Natural killer cell (primary cell): ENCODE measurements at regions of chr14 and their contacts with region 1.

Region 1: GRCh38 chr14:35404449-35405303 is at the start of gene NFKBIA:
- DNase-seq: peak; percentile 96 to 97
- ATAC-seq: peak; percentile 51 to 81 (median 63)
- H3K4me3 ChIP-seq: peak within 1 kb of the TSS; percentile 90
- H3K4me3 Mint-ChIP-seq: peak within 1 kb of the TSS; percentile 99
- H3K27ac ChIP-seq: peak within 1 kb of the TSS; percentile 96
- H3K27ac Mint-ChIP-seq: peak within 1 kb of the TSS; percentile 98
- H3K4me1 ChIP-seq: peaks cover 46% of the 10 kb centered on the region
- H3K4me1 Mint-ChIP-seq: peaks cover 59 to 63% of the 10 kb centered on the region in 2 donors
- H3K27me3 ChIP-seq: no peaks in the 10 kb centered on the region
- H3K27me3 Mint-ChIP-seq: no peaks in the 10 kb centered on the region
- CTCF ChIP-seq: no peak
- total RNA-seq, gene NFKBIA: 2,039 to 3,339 (median 2,499) TPM

Region 2: GRCh38 chr14:34857689-34858449 is 546.8 kb before region 1 on chr14:
- intact Hi-C with region 1: loop called (anchors 5 kb)
- DNase-seq: peak; percentile 27 to 64
- ATAC-seq: peak; percentile 69 to 88 (median 78)
- H3K4me3 ChIP-seq: no peak overlapping the region
- H3K4me3 Mint-ChIP-seq: peak overlapping the region; percentile 87
- H3K27ac ChIP-seq: peak overlapping the region; percentile 80
- H3K27ac Mint-ChIP-seq: peak overlapping the region; percentile 86 to 94
- H3K4me1 ChIP-seq: peaks cover 30% of the 10 kb centered on the region
- H3K4me1 Mint-ChIP-seq: peaks cover 44 to 49% of the 10 kb centered on the region in 2 donors
- H3K27me3 ChIP-seq: no peaks in the 10 kb centered on the region
- H3K27me3 Mint-ChIP-seq: no peaks in the 10 kb centered on the region
- CTCF ChIP-seq: no peak

Region 3: DNA sequence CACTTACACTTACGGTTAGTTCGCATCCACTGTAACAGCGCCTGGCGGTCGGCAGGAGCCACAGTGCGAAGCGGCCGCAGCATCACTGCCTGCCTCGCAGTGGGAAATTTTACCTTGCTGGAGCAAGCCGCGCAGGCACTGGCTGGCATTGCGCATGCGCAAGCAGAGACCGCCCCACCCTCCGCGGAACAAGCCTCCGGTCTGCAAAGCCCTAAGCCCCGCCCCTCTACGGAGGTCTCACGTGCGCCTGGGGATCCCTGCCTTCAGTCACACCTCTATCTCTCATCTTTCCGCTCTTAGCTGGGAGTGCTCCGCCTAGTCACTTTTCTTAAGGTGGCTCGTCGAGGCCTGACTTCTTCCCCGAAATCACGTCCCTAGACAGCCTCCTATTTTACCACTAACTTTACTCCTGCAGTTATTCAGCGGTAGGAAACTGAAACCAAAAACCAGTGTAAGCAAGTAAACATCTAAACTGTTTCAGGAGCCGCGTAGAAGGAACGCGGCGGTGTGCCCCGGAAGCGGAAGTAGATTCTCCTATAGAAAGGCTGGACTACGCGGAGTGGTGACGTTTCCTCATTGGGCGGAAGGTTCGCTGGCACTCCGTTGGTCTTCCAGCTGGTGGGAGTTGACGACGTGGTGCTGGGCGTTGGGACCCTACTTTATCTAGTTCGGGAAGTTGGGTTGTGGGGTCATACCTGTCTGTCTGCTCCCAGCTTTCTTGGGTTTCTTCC is 422.1 kb before region 1 on chr14 and contains the start of gene SRP54:
- intact Hi-C with region 1: loop called (anchors 5 kb)
- DNase-seq: peak; percentile 99 to 100
- ATAC-seq: peak; percentile 89 to 98 (median 89)
- H3K4me3 ChIP-seq: peak within 1 kb of the TSS; percentile 74
- H3K4me3 Mint-ChIP-seq: no peak within 1 kb of the TSS
- H3K27ac ChIP-seq: peak within 1 kb of the TSS; percentile 94
- H3K27ac Mint-ChIP-seq: no peak within 1 kb of the TSS
- H3K4me1 ChIP-seq: peaks cover 20% of the 10 kb centered on the region
- H3K4me1 Mint-ChIP-seq: peaks cover 0 to 6% of the 10 kb centered on the region in 2 donors
- H3K27me3 ChIP-seq: no peaks in the 10 kb centered on the region
- H3K27me3 Mint-ChIP-seq: no peaks in the 10 kb centered on the region
- CTCF ChIP-seq: no peak
- total RNA-seq, gene SRP54: 41.2 to 63.2 (median 48.8) TPM

Region 4: DNA sequence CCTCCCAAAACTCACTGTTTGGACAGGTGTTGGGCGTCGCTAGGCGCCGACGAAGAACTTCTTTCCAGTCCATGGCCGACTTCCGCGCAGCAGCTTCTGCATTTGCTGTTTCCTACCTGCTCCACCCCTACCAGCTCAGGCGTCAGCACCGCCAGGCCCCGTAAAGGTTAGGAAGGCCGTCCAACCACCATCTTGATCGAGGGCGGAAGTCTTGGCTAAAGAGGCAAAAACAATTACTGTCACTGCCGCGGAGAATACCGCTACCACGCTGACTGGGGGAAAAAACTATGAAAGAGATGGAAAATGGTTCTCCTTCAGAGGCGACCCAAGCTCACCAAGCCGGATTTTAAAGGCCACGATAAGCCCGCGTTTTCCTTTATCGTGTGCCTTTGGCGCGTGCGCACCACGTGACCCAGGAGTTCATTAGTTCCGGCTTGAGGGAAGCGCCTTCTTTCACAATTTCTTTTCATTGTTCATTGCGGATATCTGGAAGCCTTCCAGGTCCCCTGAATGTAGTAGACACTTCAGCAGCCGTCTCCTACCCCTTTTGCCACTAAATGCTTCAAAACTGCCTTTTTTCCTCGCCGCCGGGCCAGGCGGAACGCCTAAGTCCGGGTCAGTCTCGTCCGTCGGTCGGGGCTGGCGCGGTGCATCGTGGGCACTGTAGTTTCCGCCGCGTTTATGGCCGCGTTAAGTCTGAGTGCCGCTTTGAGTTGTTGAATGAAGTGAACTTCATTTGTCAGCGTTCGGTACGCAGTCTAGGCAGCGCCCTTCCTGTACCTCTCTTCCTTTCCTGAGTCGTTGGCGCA is 282.6 kb before region 1 on chr14 and contains the starts of genes PPP2R3C and PRORP:
- intact Hi-C with region 1: loop called (anchors 1 kb)
- DNase-seq: peak; percentile 81 to 96
- ATAC-seq: peak; percentile 83 to 94 (median 85)
- H3K4me3 ChIP-seq: peak within 1 kb of the TSS; percentile 72
- H3K4me3 Mint-ChIP-seq: peak within 1 kb of the TSS; percentile 97
- H3K27ac ChIP-seq: peak within 1 kb of the TSS; percentile 96
- H3K27ac Mint-ChIP-seq: peak within 1 kb of the TSS; percentile 99
- H3K4me1 ChIP-seq: peaks cover 33% of the 10 kb centered on the region
- H3K4me1 Mint-ChIP-seq: peaks cover 56 to 60% of the 10 kb centered on the region in 2 donors
- H3K27me3 ChIP-seq: no peaks in the 10 kb centered on the region
- H3K27me3 Mint-ChIP-seq: no peaks in the 10 kb centered on the region
- CTCF ChIP-seq: no peak
- total RNA-seq, gene PPP2R3C: 41.5 to 49.7 (median 48.3) TPM
- total RNA-seq, gene PRORP: 18.3 to 35.8 (median 20.5) TPM

Region 5: DNA sequence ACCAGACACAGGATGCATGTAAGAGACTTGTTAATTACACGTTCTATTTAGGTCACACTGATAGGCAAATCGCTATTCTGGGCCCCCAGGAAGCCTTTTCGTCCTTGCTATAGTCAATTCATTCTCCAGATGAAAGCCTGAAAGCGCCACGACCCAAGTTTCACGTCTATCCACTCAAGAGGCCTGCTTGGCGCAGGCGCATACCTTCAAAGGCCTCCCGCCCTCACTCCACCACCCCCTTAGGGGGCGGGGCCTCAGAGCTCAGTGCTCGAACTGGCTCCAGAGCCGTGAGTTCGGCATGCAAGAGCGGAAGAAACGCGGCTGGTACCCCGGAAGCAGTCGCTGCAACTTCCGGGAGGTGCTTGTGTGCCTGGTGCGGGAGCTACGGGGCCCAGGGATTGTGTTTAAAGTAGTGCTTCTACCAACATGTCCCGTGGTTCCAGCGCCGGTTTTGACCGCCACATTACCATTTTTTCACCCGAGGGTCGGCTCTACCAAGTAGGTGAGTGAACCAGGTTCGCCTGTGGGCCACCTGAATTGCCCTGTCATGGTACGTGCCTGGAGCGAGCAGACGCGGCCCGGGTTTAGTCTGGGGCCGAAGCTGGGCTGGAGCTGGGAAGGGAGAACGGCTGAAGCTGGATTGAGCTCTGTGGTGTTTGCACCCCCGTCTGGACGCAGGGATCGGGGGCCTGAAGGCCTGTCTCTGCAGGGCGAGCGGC is 112.5 kb before region 1 on chr14 and contains the start of gene PSMA6:
- intact Hi-C with region 1: loop called (anchors 1 kb)
- DNase-seq: peak; percentile 96 to 100
- ATAC-seq: peak; percentile 91 to 97 (median 92)
- H3K4me3 ChIP-seq: peak within 1 kb of the TSS; percentile 63
- H3K4me3 Mint-ChIP-seq: peak within 1 kb of the TSS; percentile 97
- H3K27ac ChIP-seq: peak within 1 kb of the TSS; percentile 81
- H3K27ac Mint-ChIP-seq: peak within 1 kb of the TSS; percentile 98 to 99
- H3K4me1 ChIP-seq: peaks cover 31% of the 10 kb centered on the region
- H3K4me1 Mint-ChIP-seq: peaks cover 43 to 45% of the 10 kb centered on the region in 2 donors
- H3K27me3 ChIP-seq: no peaks in the 10 kb centered on the region
- H3K27me3 Mint-ChIP-seq: no peaks in the 10 kb centered on the region
- CTCF ChIP-seq: no peak
- total RNA-seq, gene PSMA6: 130 to 141 (median 139) TPM

Region 6: DNA sequence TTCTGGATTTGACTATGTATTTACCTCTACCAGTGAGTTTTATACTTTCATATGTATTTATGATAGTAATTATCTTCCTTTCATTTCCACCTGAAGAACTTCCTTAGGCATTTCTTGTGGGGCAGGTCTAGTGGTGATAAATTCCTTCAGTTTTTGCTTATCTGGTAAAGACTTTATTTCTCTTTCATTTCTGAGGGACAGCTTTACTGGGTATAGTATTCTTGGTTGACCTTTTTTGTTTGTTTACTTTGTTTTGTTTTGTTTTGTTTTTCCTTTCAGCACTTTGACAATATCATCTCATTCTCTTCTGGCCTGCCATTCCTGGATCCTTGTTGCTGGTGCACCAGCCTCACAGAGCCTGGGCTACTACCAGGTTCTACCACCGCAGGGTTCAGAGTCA is 53.8 kb after region 1 on chr14:
- intact Hi-C with region 1: no loop called
- DNase-seq: no peak
- ATAC-seq: no peak
- H3K4me3 ChIP-seq: no peak overlapping the region
- H3K4me3 Mint-ChIP-seq: no peak overlapping the region
- H3K27ac ChIP-seq: no peak overlapping the region
- H3K27ac Mint-ChIP-seq: no peak overlapping the region
- H3K4me1 ChIP-seq: no peaks in the 10 kb centered on the region
- H3K4me1 Mint-ChIP-seq: no peaks in the 10 kb centered on the region
- H3K27me3 ChIP-seq: no peaks in the 10 kb centered on the region
- H3K27me3 Mint-ChIP-seq: peaks cover 11 to 39% of the 10 kb centered on the region in 2 donors
- CTCF ChIP-seq: no peak